Psoas muscle (tissue), 8 donors: ENCODE measurements at regions of chr9 and their contacts with region 1.

Region 1: GRCh38 chr9:4297151-4297785 is 2.6 kb downstream of the GLIS3 start:
- DNase-seq: peak; percentile 74 to 81
- ATAC-seq: peak; percentile 46 to 63 (median 59)
- H3K4me3 ChIP-seq: peak overlapping the region; percentile 88
- H3K27ac ChIP-seq: peak overlapping the region; percentile 89
- H3K4me1 ChIP-seq: peaks cover 6% of the 10 kb centered on the region
- H3K27me3 ChIP-seq: peaks cover 0 to 21% (median 0%) of the 10 kb centered on the region in 3 donors
- CTCF ChIP-seq: peak; percentile 26

Region 2: DNA sequence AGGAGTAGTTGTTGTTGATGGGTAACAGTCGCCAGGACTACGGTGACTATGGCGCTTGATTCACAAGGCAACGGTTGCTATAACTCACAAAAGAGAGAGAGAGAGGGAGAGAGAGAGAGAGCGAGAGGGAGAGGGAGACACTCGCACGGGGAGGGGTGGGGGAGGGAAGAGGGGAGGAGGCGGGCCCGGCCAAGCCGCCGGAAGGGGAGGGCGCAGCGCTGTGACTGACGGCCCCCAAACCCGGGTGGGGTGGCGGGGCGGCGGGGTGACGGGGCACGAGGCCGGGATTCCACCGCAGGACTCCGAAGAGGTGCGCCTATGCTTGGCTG is 771.5 kb before region 1 on chr9 and contains the start of gene RFX3:
- intact Hi-C with region 1: loop called in 1 of 2 experiments (anchors 5 kb)
- DNase-seq: peak; percentile 92 to 97
- ATAC-seq: peak; percentile 88 to 94 (median 90)
- H3K4me3 ChIP-seq: peak within 1 kb of the TSS; percentile 80
- H3K27ac ChIP-seq: peak within 1 kb of the TSS; percentile 99
- H3K4me1 ChIP-seq: peaks cover 34% of the 10 kb centered on the region
- H3K27me3 ChIP-seq: no peaks in the 10 kb centered on the region
- CTCF ChIP-seq: no peak
- total RNA-seq, gene RFX3: 2.8 to 5.7 (median 5.3) TPM

Region 3: GRCh38 chr9:4143936-4144717 is 153.1 kb before region 1 on chr9:
- intact Hi-C with region 1: loop called in 1 of 2 experiments (anchors 10 kb)
- DNase-seq: no peak
- ATAC-seq: peak in 3 of 4 donors; percentile 42 to 80 (median 52)
- H3K4me3 ChIP-seq: peak overlapping the region; percentile 52
- H3K27ac ChIP-seq: no peak overlapping the region
- H3K4me1 ChIP-seq: peaks cover 8% of the 10 kb centered on the region
- H3K27me3 ChIP-seq: no peaks in the 10 kb centered on the region
- CTCF ChIP-seq: no peak